A549 (cell line): ENCODE measurements at regions of chr3 and their contacts with region 1.

Region 1: DNA sequence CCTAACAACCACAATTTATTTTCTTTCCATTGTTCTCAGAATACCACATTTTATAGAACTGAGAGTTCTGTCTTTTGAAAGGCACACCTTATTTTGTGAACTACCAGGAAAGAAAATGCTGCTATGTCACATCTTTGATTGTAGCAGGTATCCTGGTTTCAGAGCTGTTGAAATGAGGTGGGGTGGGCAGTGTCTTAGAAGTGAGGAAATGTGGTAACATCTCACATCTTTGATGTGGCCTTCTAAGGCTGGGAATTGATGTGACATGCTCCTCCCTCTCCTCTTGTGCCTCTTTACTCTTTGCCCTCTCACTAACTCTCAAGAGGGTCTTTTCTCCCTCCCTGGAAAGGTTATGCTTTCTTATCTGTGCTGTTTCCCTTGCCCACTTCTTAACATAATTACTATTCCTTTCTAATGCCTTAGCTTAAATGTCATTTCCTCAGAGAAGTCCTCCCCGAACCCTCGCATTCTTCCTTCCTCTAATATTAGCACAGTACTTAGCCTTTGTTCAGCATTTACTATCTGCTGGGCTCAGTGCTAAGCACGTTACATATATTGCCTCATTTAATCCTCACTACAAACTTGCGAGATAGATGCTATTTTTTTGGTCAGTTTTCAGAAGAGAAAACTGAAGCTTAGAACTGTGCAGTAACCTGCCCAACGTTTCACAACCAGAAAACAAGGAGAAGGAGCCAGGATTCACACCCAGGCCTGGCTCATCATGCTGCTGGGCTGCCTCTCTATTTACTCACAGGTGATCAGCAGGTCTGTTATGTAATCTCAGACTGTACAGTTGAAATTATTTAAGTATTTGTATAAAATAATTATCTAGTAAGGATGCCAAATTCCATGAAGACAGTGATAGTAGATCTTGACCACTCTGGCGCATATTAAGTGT is 24.0 kb upstream of the SPTSSB start:
- DNase-seq: no peak
- ATAC-seq: no peak
- H3K4me3 ChIP-seq: no peak overlapping the region
- H3K27ac ChIP-seq: no peak overlapping the region
- H3K4me1 ChIP-seq: no peaks in the 10 kb centered on the region
- CTCF ChIP-seq: no peak
- EP300 ChIP-seq: no peak
- POLR2A ChIP-seq: no peak
- RAD21 ChIP-seq: no peak

Region 2: DNA sequence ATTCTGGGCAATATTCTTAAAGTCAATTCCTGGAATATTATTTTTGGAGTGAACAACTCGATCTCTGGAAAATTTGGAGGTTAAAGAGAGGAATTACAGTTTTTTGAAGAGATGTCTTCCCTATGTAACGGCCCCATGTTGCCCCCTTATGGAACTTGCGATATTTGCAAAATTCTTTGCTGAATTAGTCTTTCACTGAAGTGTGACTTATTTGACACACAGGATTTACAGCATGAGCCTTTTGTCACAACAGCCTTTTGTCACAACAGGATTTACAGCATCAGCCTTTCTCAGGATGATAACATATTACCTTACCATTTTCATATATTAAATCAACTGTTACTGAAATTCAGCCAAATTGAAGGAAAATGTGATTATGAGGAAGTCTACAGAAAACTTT is 13.7 kb after region 1 on chr3:
- CTCF ChIA-PET with region 1: interaction called, 14 read pairs
- POLR2A ChIA-PET with region 1: no interaction called
- DNase-seq: peak; percentile 14 to 58
- ATAC-seq: peak in 1 of 2 experiments; percentile 72; a peak in 3 of 6 replicates
- H3K4me3 ChIP-seq: no peak overlapping the region
- H3K27ac ChIP-seq: no peak overlapping the region
- H3K4me1 ChIP-seq: peaks cover 15% of the 10 kb centered on the region; the same call in 1 of the 3 replicates
- CTCF ChIP-seq: peak; percentile 74
- EP300 ChIP-seq: no peak
- POLR2A ChIP-seq: no peak
- RAD21 ChIP-seq: peak; percentile 80 to 82